MCF 10A (cell line): ENCODE measurements at regions of chr20 and their contacts with region 1.

Region 1: DNA sequence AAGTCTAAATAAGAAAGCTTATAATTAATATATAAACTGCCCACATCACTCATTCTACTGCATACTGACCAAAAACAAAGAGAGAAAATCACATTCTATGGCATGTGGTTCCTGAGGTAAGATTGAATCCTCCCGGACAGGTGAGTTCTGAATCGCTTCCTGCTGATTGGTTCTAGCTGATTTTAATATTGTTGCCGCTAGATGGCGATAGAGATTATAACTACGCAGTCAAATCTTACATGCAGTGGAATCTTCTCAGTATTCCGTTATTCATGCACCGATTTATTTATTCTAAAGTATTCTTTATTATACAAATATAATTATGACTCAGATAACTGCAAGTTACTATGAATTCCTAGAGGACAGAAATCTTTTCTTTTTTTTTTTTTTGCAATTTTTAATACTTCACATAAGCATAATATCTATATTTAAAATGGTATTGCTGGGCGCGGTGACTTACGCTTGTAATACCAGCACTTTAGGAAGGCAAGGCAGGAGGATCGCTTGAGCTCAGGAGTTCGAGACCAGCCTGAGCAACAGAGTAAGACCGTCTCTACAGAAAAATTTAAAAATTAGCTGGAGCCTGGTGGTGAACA is 24.2 kb upstream of the TMX4 start:
- DNase-seq: peak; percentile 65
- H3K4me3 Mint-ChIP-seq: no peak overlapping the region
- H3K27ac Mint-ChIP-seq: no peak overlapping the region
- H3K4me1 Mint-ChIP-seq: no peaks in the 10 kb centered on the region
- H3K27me3 Mint-ChIP-seq: peaks cover 14% of the 10 kb centered on the region
- CTCF ChIP-seq: peak; percentile 65

Region 2: DNA sequence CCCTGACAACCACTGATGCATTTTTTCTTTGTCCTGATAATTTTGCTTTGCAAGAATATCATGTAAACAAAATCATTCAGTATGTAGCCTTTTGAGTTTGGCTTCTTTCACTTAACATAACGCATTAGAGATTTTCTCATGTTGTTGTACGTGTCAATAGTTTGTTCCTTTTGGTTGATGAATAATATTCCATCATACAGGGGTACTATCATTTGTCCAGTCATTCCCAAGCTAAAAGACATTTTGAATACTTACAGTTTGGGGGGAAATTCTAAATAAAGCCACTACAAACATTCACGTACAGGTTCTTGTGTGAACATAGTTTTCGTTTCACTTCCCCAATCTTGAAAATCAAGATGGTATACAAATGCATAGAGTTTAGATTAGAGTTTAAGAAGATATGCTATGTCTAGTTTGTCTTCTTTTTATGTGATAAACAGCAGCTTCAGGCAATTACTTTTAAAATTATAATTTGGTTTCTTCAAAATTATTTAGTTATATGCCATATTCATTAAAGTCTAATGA is 108.7 kb before region 1 on chr20:
- CTCF ChIA-PET with region 1: interaction called, 14 read pairs
- POLR2A ChIA-PET with region 1: no interaction called
- intact Hi-C with region 1: no loop called
- DNase-seq: no peak
- H3K4me3 Mint-ChIP-seq: no peak overlapping the region
- H3K27ac Mint-ChIP-seq: no peak overlapping the region
- H3K4me1 Mint-ChIP-seq: no peaks in the 10 kb centered on the region
- H3K27me3 Mint-ChIP-seq: no peaks in the 10 kb centered on the region
- CTCF ChIP-seq: no peak

Region 3: DNA sequence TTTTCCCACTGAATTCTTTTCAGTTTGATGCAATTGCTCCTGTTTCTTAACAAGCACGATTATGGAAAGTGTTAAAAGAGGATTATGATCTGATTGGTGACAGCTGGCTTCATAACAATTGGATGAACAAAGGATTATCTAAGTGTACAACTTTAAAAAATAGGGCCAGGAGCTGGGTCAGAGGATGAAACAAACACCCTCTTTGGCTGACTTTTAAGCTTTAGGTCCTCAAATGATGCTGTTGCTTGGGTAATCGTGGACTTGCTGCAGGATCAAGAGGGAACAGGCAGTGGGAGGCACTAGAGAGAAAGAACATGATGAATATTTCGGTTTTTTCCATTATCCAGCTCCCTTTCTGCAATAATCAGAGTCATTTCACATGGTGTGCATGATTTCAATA is 11.3 kb after region 1 on chr20:
- CTCF ChIA-PET with region 1: interaction called, 27 read pairs
- POLR2A ChIA-PET with region 1: no interaction called
- intact Hi-C with region 1: no loop called
- DNase-seq: no peak
- H3K4me3 Mint-ChIP-seq: no peak overlapping the region
- H3K27ac Mint-ChIP-seq: no peak overlapping the region
- H3K4me1 Mint-ChIP-seq: no peaks in the 10 kb centered on the region
- H3K27me3 Mint-ChIP-seq: no peaks in the 10 kb centered on the region
- CTCF ChIP-seq: no peak

Region 4: DNA sequence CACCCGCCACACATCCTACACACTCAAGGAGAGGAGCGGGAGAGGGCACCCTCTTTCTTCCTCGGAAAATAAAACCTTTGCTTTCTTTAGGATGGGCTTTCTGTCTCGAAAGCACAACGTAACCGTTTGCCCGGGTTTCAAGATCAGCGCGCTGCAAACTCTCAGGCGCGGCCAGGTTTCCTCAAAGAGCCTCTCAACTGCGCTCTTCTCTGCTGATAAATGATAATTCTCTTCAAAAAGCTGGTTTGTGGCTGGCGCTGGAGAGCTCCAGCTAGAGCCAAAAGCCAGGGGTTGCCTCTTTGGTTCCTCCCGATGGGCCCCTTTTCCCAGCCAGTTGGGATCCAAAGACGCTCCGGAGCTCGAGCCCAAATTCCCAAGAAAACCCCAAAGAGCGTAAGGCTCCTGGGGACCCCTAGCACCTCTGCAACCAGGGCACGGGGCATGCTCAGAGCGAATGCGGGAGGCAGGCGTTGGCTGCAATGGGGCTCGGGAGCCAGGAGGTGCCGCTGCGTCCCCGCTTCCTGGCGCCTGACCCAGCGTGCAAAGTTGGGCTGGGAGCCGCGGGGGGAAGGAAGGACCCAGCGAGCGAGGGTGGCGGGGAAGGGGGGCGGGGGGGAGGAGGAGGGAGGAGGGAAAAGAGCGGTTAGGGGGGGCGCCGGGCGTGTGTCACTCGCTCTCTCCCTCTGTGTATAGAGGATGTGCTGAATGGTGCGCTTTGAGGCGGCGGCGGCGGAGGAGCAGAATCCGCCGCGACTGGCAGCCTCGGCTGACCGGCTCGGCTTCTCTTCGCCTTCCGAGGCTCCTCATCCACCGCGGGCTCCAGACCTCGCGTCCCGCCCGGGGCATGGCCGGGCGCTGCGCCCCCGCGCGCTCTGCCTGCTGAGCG is 88.1 kb after region 1 on chr20 and contains the start of gene PLCB1:
- CTCF ChIA-PET with region 1: interaction called, 36 read pairs
- POLR2A ChIA-PET with region 1: no interaction called
- intact Hi-C with region 1: loop called (anchors 1 kb)
- DNase-seq: peak; percentile 79
- H3K4me3 Mint-ChIP-seq: peak within 1 kb of the TSS; percentile 75
- H3K27ac Mint-ChIP-seq: peak within 1 kb of the TSS; percentile 43
- H3K4me1 Mint-ChIP-seq: peaks cover 8% of the 10 kb centered on the region
- H3K27me3 Mint-ChIP-seq: peaks cover 15% of the 10 kb centered on the region
- CTCF ChIP-seq: peak; percentile 95
- total RNA-seq, gene PLCB1: 5.9 and 8.2 TPM in 2 replicates

Region 5: DNA sequence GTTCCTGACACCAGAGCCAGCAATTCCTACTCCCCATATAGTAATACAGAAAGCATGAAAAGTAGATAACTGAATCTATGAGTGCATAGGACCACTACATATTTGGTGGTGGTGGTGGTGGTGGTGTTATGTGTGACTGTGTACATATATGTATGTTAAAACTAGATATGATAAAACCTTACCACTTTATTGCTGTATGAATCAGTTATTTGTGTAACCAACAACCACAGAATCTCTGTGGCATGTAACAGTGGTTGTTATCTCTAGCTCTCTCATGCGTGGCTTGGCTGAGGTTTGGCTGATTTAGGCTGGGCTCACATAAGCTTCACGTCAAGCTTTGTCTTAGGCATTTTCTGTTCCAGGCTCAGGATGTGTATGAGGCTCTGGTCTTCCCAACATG is 144.0 kb after region 1 on chr20:
- CTCF ChIA-PET with region 1: no interaction called
- POLR2A ChIA-PET with region 1: no interaction called
- intact Hi-C with region 1: no loop called
- DNase-seq: no peak
- H3K4me3 Mint-ChIP-seq: no peak overlapping the region
- H3K27ac Mint-ChIP-seq: no peak overlapping the region
- H3K4me1 Mint-ChIP-seq: peaks cover 8% of the 10 kb centered on the region
- H3K27me3 Mint-ChIP-seq: no peaks in the 10 kb centered on the region
- CTCF ChIP-seq: no peak

Region 6: GRCh38 chr20:8454137-8454712 is 410.4 kb after region 1 on chr20:
- CTCF ChIA-PET with region 1: no interaction called
- POLR2A ChIA-PET with region 1: no interaction called
- intact Hi-C with region 1: loop called (anchors 5 kb)
- DNase-seq: peak; percentile 85
- H3K4me3 Mint-ChIP-seq: no peak overlapping the region
- H3K27ac Mint-ChIP-seq: no peak overlapping the region
- H3K4me1 Mint-ChIP-seq: peaks cover 9% of the 10 kb centered on the region
- H3K27me3 Mint-ChIP-seq: no peaks in the 10 kb centered on the region
- CTCF ChIP-seq: peak; percentile 33